ENCODE measurements at regions of chr10 and their contacts with region 1.

Region 1: GRCh38 chr10:59625721-59626522 is 83.7 kb downstream of the SLC16A9 start:
- DNase-seq: no peak
- H3K4me3 ChIP-seq: peak overlapping the region in 1 of 4 donors; percentile 0
- H3K27ac ChIP-seq: peak overlapping the region in 2 of 4 donors; percentile 54
- H3K4me1 ChIP-seq: peaks cover 0 to 12% (median 5%) of the 10 kb centered on the region in 4 donors
- H3K27me3 ChIP-seq: no peaks in the 10 kb centered on the region
- CTCF ChIP-seq: peak; percentile 73 to 82 (median 75)
- EP300 ChIP-seq: no peak
- POLR2A ChIP-seq: no peak

Region 2: DNA sequence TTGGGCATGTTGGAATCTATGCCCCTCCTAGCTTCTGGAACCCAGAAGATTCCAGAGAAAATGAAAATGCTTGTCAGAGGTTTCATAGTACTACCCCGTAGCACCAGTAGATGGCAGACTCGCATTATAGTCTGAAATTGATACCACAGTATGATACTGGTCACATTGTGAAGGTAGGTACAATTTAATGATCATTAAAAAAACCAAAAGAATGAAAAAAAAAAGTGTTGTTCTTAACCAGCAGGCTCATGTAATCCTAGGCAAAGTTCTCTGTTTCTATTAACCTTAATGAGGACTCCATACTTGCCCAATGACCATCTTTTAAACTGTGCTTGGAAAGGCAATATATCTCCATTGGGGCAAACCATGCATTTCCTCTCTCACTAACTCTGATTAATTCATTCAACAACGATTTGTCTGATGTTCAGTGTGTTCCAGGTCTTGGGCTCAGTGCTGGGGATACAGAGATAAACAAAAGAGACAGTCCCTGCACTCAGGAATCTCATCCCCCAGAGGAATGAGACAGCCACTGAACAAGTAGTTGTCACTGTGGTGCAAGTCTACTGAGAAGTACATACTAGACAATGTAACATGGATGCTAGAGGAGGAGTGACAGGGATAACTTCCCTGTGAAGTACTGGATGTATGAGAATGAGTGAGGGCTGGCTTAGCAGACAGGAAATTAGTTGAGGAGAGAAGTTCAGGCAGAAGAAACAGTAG is 673.0 kb before region 1 on chr10:
- intact Hi-C with region 1: loop called (anchors 5 kb)
- DNase-seq: no peak
- H3K4me3 ChIP-seq: peak overlapping the region in 1 of 4 donors; percentile 26
- H3K27ac ChIP-seq: peak overlapping the region; percentile 49 to 62 (median 58)
- H3K4me1 ChIP-seq: peaks cover 0 to 41% (median 29%) of the 10 kb centered on the region in 4 donors
- H3K27me3 ChIP-seq: no peaks in the 10 kb centered on the region
- CTCF ChIP-seq: peak; percentile 79 to 85 (median 83)
- EP300 ChIP-seq: no peak
- POLR2A ChIP-seq: no peak

Region 3: GRCh38 chr10:59808896-59809643 is 183.1 kb after region 1 on chr10:
- intact Hi-C with region 1: loop called (anchors 10 kb)
- DNase-seq: no peak
- H3K4me3 ChIP-seq: no peak overlapping the region
- H3K27ac ChIP-seq: no peak overlapping the region
- H3K4me1 ChIP-seq: peaks cover 4 to 29% (median 14%) of the 10 kb centered on the region in 4 donors
- H3K27me3 ChIP-seq: no peaks in the 10 kb centered on the region
- CTCF ChIP-seq: peak; percentile 49 to 64 (median 55)
- EP300 ChIP-seq: no peak
- POLR2A ChIP-seq: no peak

Region 4: DNA sequence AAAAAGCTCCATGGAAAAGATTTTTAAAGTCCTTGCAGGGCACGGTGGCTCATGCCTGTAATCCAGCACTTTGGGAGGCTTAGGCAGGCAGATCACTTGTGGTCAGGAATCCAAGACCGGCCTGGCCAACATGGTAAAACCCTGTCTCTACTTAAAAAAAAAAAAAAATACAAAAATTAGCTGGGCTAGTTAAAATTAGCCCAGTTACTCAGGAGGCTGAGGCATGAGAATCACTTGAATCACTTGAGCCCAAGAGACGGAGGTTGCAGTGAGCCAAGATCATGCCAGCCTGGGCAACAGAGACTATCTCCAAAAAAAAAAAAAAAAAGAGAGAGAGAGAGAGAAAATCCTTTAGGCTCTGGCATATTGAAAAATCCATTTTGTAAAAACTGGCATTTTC is 218.5 kb after region 1 on chr10:
- intact Hi-C with region 1: no loop called
- DNase-seq: no peak
- H3K4me3 ChIP-seq: no peak overlapping the region
- H3K27ac ChIP-seq: no peak overlapping the region
- H3K4me1 ChIP-seq: peaks cover 5 to 20% (median 10%) of the 10 kb centered on the region in 4 donors
- H3K27me3 ChIP-seq: no peaks in the 10 kb centered on the region
- CTCF ChIP-seq: no peak
- EP300 ChIP-seq: no peak
- POLR2A ChIP-seq: no peak

Region 5: GRCh38 chr10:59906417-59907202 is 280.7 kb after region 1 on chr10 and contains the start of gene CCDC6:
- intact Hi-C with region 1: loop called (anchors 5 kb)
- DNase-seq: peak; percentile 97
- H3K4me3 ChIP-seq: peak within 1 kb of the TSS; percentile 86 to 99 (median 90)
- H3K27ac ChIP-seq: peak within 1 kb of the TSS; percentile 92 to 97 (median 94)
- H3K4me1 ChIP-seq: peaks cover 28 to 62% (median 57%) of the 10 kb centered on the region in 4 donors
- H3K27me3 ChIP-seq: no peaks in the 10 kb centered on the region
- CTCF ChIP-seq: peak; percentile 75 to 82 (median 79)
- EP300 ChIP-seq: no peak
- POLR2A ChIP-seq: peak; percentile 78
- total RNA-seq, gene CCDC6: 41.4 to 71.0 (median 57.2) TPM

Region 6: DNA sequence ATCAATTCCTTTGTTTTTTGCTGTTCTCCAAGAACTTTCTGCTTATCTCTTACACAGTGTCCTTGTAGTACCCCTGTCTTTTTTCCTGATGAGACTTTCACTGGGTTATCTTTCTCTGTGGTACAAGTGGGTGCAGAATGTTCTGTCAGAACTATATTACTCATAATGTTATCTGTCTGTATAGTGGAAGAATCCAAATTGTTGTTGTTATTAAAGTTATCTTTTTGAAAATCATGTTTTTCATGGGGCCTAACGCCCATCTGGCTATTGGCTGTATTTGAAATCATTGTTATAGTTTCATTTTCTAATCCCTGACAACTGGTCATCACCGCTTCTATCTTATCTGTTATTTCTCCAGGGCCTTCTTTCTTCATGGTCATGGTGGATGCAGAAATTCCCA is 443.4 kb after region 1 on chr10:
- intact Hi-C with region 1: no loop called
- DNase-seq: no peak
- H3K4me3 ChIP-seq: no peak overlapping the region
- H3K27ac ChIP-seq: no peak overlapping the region
- H3K4me1 ChIP-seq: no peaks in the 10 kb centered on the region
- H3K27me3 ChIP-seq: no peaks in the 10 kb centered on the region
- CTCF ChIP-seq: no peak
- EP300 ChIP-seq: no peak
- POLR2A ChIP-seq: no peak

Region 7: DNA sequence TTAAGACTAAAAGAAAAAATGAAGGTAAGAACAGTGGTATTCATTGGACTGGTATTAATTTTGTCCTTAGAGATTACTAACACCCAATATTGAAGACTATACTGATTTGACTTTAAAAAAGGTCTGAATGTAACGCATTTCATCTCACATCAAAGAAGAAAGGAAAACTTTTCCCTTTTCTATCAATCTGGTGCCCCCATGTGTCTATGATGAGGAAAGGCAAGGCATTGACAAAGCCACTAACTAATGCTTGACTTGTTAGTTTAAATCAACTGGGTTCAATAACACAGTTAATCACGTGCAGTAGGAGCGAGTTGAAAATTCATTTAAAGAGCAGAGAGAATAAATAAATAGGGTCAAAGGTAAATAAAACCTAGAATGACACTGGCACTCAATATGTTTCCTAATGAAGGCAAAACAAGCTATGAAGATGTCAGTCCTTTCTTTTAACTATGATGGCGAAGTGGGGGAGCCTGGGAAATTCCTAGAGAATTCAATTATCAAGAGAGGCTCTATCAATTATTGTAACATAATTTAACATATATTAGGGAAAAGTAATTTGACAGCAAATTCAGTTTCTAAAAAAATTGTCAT is 582.9 kb after region 1 on chr10:
- intact Hi-C with region 1: loop called (anchors 5 kb)
- DNase-seq: no peak
- H3K4me3 ChIP-seq: no peak overlapping the region
- H3K27ac ChIP-seq: no peak overlapping the region
- H3K4me1 ChIP-seq: no peaks in the 10 kb centered on the region
- H3K27me3 ChIP-seq: no peaks in the 10 kb centered on the region
- CTCF ChIP-seq: peak; percentile 62 to 72 (median 69)
- EP300 ChIP-seq: no peak
- POLR2A ChIP-seq: no peak

Measured in esophagus muscularis mucosa (tissue), 4 donors.